Activated B cell treated with CpG ODN at 0.5 μM for 24 hours (primary cell): ENCODE measurements at regions of chr19 and their contacts with region 1.

Region 1: GRCh38 chr19:14556662-14557188 is 15.1 kb downstream of the NDUFB7 start:
- DNase-seq: peak; percentile 67
- ATAC-seq: peak; percentile 92
- H3K4me3 Mint-ChIP-seq: peak overlapping the region; percentile 35
- H3K27ac Mint-ChIP-seq: no peak overlapping the region
- H3K4me1 Mint-ChIP-seq: peaks cover 28% of the 10 kb centered on the region
- H3K27me3 Mint-ChIP-seq: no peaks in the 10 kb centered on the region
- CTCF ChIP-seq: peak; percentile 66

Region 2: DNA sequence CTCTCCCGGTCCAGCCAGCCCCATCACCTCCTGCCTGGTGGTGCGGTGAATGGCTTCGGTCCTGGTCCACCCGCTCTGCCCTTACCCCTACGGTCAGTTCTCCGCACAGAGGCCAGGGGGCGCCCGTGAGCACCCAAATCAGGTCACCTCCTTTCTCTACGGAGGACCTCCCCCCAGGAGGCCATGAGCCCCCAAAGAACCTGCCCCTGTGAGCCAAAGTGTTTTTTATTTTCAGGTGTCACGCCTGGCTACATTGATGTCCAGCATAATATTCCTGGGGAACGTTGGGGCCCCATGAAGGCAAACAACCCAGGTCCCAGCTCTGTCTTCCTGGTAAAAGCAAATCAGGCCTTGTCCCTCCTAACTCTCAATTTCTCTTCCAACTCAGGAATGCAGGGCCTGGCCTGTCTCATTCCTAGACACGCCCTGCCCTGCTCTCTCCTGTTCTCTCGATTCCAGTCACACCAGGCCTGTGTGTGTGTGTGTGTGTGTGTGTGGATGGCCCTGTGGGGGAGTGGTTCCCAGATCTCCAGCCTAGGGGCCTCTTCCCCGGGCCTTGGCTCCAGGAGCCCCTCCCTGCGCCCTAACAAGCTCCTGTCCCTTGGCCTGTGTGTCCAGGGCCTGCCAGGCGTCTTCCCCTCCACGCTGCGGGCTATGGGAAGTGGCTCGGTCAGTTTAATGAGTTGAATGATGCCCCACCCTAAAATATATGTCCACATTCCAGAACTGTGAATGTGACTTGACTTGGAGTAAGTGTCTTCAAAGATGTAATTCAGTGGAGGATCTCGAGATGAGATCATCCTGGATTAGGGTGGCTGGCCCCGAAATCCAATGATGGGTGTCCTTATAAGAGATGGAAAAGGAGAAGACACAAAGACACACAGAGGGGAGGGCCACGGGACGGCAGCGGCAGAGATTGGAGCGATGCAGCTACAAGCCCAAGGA is 51.0 kb before region 1 on chr19:
- CTCF ChIA-PET with region 1: interaction called, 6 read pairs
- POLR2A ChIA-PET with region 1: no interaction called
- intact Hi-C with region 1: loop called (anchors 1 kb)
- DNase-seq: peak; percentile 63
- ATAC-seq: peak; percentile 95
- H3K4me3 Mint-ChIP-seq: no peak overlapping the region
- H3K27ac Mint-ChIP-seq: no peak overlapping the region
- H3K4me1 Mint-ChIP-seq: peaks cover 3% of the 10 kb centered on the region
- H3K27me3 Mint-ChIP-seq: peaks cover 2% of the 10 kb centered on the region
- CTCF ChIP-seq: no peak

Region 3: GRCh38 chr19:14890643-14891379 is 334.1 kb after region 1 on chr19:
- CTCF ChIA-PET with region 1: no interaction called
- POLR2A ChIA-PET with region 1: no interaction called
- intact Hi-C with region 1: loop called (anchors 1 kb)
- DNase-seq: no peak
- ATAC-seq: no peak
- H3K4me3 Mint-ChIP-seq: no peak overlapping the region
- H3K27ac Mint-ChIP-seq: no peak overlapping the region
- H3K4me1 Mint-ChIP-seq: peaks cover 25% of the 10 kb centered on the region
- H3K27me3 Mint-ChIP-seq: peaks cover 24% of the 10 kb centered on the region
- CTCF ChIP-seq: no peak